Heart left ventricle (tissue), 16 donors: ENCODE measurements at regions of chr6 and their contacts with region 1.

Region 1: DNA sequence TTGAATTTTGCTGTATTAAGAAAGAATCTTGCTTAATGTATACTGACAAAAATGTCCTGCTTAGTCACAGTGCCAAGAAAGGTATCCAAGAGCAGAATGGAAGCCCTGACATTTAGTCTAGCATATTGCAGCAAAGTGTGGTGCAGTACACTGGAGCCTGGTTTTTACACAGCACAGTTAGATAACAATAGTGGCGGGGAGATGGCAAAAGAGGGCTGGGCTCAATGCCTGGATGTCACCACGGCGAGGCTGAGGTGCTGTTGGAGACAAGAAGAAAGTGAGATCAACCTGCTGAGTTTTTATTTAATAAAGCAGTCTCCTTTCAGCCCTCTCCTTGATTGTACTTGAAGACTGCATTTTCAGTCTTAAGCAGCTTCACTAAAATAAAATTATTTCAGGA is 426.0 kb downstream of the LMBRD1 start:
- DNase-seq: peak in 4 of 5 donors; percentile 33 to 59 (median 48)
- ATAC-seq: peak; percentile 78 to 98 (median 94)
- H3K4me3 ChIP-seq: no peak overlapping the region
- H3K27ac ChIP-seq: no peak overlapping the region
- H3K4me1 ChIP-seq: peaks cover 0 to 6% (median 0%) of the 10 kb centered on the region in 12 donors
- H3K27me3 ChIP-seq: no peaks in the 10 kb centered on the region
- CTCF ChIP-seq: no peak
- POLR2A ChIP-seq: no peak

Region 2: GRCh38 chr6:69138893-69139494 is 231.8 kb before region 1 on chr6:
- intact Hi-C with region 1: no loop called
- DNase-seq: peak in 4 of 5 donors; percentile 20 to 64 (median 44)
- ATAC-seq: peak; percentile 86 to 90 (median 86)
- H3K4me3 ChIP-seq: peak overlapping the region in 7 of 12 donors; percentile 8 to 36 (median 23)
- H3K27ac ChIP-seq: peak overlapping the region; percentile 32 to 85 (median 73)
- H3K4me1 ChIP-seq: peaks cover 0 to 19% (median 2%) of the 10 kb centered on the region in 12 donors
- H3K27me3 ChIP-seq: no peaks in the 10 kb centered on the region
- CTCF ChIP-seq: no peak
- POLR2A ChIP-seq: no peak

Region 3: GRCh38 chr6:69294407-69294806 is 76.4 kb before region 1 on chr6:
- intact Hi-C with region 1: loop called in 1 of 10 experiments (anchors 5 kb)
- DNase-seq: no peak
- ATAC-seq: peak in 1 of 4 donors; percentile 58
- H3K4me3 ChIP-seq: peak overlapping the region in 6 of 12 donors; percentile 5 to 32 (median 17)
- H3K27ac ChIP-seq: no peak overlapping the region
- H3K4me1 ChIP-seq: peaks cover 0 to 9% (median 0%) of the 10 kb centered on the region in 12 donors
- H3K27me3 ChIP-seq: no peaks in the 10 kb centered on the region
- CTCF ChIP-seq: no peak
- POLR2A ChIP-seq: no peak

Region 4: GRCh38 chr6:69349771-69350170 is 21.0 kb before region 1 on chr6:
- intact Hi-C with region 1: no loop called
- DNase-seq: peak in 4 of 5 donors; percentile 17 to 72 (median 53)
- ATAC-seq: peak in 3 of 4 donors; percentile 52 to 83 (median 63)
- H3K4me3 ChIP-seq: no peak overlapping the region
- H3K27ac ChIP-seq: no peak overlapping the region
- H3K4me1 ChIP-seq: peaks cover 0 to 5% (median 0%) of the 10 kb centered on the region in 12 donors
- H3K27me3 ChIP-seq: no peaks in the 10 kb centered on the region
- CTCF ChIP-seq: no peak
- POLR2A ChIP-seq: no peak

Region 5: GRCh38 chr6:69449887-69450286 is 79.1 kb after region 1 on chr6:
- intact Hi-C with region 1: no loop called
- DNase-seq: no peak
- ATAC-seq: no peak
- H3K4me3 ChIP-seq: no peak overlapping the region
- H3K27ac ChIP-seq: no peak overlapping the region
- H3K4me1 ChIP-seq: no peaks in the 10 kb centered on the region
- H3K27me3 ChIP-seq: no peaks in the 10 kb centered on the region
- CTCF ChIP-seq: no peak
- POLR2A ChIP-seq: no peak